ENCODE measurements at regions of chr19 and their contacts with region 1.

Region 1: DNA sequence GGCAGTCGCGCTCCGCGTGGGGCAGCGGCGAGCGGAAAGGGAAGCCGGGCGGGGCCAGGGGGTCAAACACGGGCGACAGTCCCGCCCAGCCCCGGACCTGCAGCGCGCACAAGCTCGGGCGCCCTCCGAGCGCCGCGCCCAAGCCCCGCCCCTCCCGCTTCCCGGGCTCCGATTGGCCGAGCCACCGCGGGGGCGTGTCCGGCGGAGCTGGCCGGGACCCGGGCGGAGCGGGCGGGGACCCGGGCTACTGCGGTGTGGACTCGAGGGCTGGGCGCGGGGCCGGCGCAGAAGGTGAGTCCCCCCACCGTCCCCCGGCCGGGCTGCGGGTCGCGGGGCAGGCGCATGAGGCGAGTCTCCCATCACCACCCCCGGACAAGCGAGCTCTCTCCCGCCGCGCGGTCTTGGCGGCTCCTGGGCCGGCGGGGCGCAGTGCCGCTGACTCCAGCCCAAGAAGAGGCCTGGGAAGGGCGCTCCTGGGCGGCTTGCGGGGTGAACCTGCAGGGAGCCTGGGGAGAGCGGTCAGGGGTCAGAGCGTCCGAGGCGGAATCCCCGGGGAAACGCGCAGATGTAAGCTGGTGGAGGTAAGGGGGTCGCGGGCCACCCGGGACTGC is at the start of gene PLEKHF1:
- DNase-seq: peak; percentile 73 to 88 (median 78)
- H3K4me3 ChIP-seq: peak within 1 kb of the TSS; percentile 77 to 83
- H3K4me3 Mint-ChIP-seq: peak within 1 kb of the TSS; percentile 89 to 98 (median 93)
- H3K27ac ChIP-seq: peak within 1 kb of the TSS; percentile 92
- H3K27ac Mint-ChIP-seq: peak within 1 kb of the TSS; percentile 92 to 100 (median 96)
- H3K4me1 ChIP-seq: peaks cover 42% of the 10 kb centered on the region
- H3K4me1 Mint-ChIP-seq: peaks cover 24 to 62% (median 38%) of the 10 kb centered on the region in 4 donors
- H3K27me3 ChIP-seq: no peaks in the 10 kb centered on the region
- H3K27me3 Mint-ChIP-seq: no peaks in the 10 kb centered on the region
- total RNA-seq, gene PLEKHF1: 31.2 to 32.4 TPM

Region 2: GRCh38 chr19:29576761-29577648 is 88.3 kb before region 1 on chr19:
- CTCF ChIA-PET with region 1: no interaction called
- POLR2A ChIA-PET with region 1: no interaction called
- intact Hi-C with region 1: no loop called
- DNase-seq: no peak
- H3K4me3 ChIP-seq: no peak overlapping the region
- H3K4me3 Mint-ChIP-seq: no peak overlapping the region
- H3K27ac ChIP-seq: no peak overlapping the region
- H3K27ac Mint-ChIP-seq: no peak overlapping the region
- H3K4me1 ChIP-seq: peaks cover 4% of the 10 kb centered on the region
- H3K4me1 Mint-ChIP-seq: peaks cover 0 to 2% (median 0%) of the 10 kb centered on the region in 4 donors
- H3K27me3 ChIP-seq: peaks cover 5% of the 10 kb centered on the region
- H3K27me3 Mint-ChIP-seq: peaks cover 20 to 68% of the 10 kb centered on the region in 2 donors

Region 3: GRCh38 chr19:29622138-29623070 is 42.9 kb before region 1 on chr19:
- CTCF ChIA-PET with region 1: interaction called, 75 read pairs
- POLR2A ChIA-PET with region 1: interaction called, 93 read pairs
- intact Hi-C with region 1: no loop called
- DNase-seq: peak; percentile 22 to 55 (median 36)
- H3K4me3 ChIP-seq: no peak overlapping the region
- H3K4me3 Mint-ChIP-seq: peak overlapping the region in 7 of 8 donors; percentile 19 to 85 (median 71)
- H3K27ac ChIP-seq: peak overlapping the region; percentile 35
- H3K27ac Mint-ChIP-seq: peak overlapping the region; percentile 73 to 94 (median 91)
- H3K4me1 ChIP-seq: peaks cover 52% of the 10 kb centered on the region
- H3K4me1 Mint-ChIP-seq: peaks cover 40 to 56% (median 47%) of the 10 kb centered on the region in 4 donors
- H3K27me3 ChIP-seq: no peaks in the 10 kb centered on the region
- H3K27me3 Mint-ChIP-seq: no peaks in the 10 kb centered on the region

Region 4: DNA sequence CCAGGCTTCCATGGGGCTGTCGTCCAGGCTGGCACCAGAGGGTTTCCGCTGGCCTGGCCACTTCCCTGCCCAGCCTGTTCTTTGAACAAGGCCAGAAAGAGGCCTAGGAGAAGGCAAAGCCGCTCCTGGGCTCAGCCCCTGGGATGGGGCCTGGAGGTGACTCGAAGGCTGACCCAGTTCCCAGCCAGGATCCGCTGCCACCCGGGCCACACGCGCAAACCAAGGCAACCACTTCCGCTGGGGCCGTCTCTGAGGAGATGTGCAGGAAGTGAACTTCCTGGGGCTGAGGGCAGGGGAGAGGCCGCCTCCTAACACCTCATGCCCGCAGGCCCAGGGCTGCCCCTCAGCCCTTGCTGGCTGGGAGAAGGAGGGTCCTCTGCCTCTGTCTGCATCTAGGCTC is 15.1 kb after region 1 on chr19:
- CTCF ChIA-PET with region 1: interaction called, 96 read pairs
- POLR2A ChIA-PET with region 1: interaction called, 148 read pairs
- intact Hi-C with region 1: loop called (anchors 2 kb)
- DNase-seq: peak; percentile 81 to 88 (median 88)
- H3K4me3 ChIP-seq: peak overlapping the region in 1 of 2 donors; percentile 26
- H3K4me3 Mint-ChIP-seq: peak overlapping the region; percentile 71 to 88 (median 75)
- H3K27ac ChIP-seq: peak overlapping the region; percentile 49
- H3K27ac Mint-ChIP-seq: peak overlapping the region; percentile 85 to 96 (median 93)
- H3K4me1 ChIP-seq: peaks cover 76% of the 10 kb centered on the region
- H3K4me1 Mint-ChIP-seq: peaks cover 37 to 89% (median 67%) of the 10 kb centered on the region in 4 donors
- H3K27me3 ChIP-seq: no peaks in the 10 kb centered on the region
- H3K27me3 Mint-ChIP-seq: no peaks in the 10 kb centered on the region

Region 5: DNA sequence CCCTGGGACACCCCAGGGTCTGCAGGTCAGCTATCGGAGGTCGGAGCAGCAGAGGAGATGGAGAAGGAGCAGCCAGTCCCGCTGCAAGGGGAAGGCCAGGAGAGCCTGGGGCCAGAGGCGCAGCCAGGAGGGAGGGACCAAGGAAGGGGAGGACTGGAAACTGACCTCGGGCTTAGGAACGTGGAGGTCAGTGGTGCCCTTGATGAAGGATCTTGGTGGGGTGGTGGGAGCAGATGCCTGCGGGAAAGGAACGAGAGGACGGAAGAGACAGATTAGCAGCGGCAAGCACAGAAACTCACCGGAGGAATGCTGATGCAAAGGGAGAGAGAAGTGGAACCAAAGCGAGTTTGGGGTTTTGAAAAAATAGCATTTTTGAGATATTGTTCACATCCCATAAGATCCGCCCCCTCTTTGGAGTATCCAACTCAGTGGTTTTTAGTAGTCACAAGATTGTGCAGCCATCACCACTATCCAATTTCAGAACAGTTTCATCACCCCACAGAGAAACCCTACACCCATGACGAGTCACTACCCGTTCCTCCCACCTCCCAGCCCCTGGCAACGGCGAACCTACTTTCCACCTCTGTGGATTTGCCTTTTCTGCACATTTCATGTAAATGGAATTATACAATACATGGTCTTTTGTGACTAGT is 22.1 kb after region 1 on chr19:
- CTCF ChIA-PET with region 1: interaction called, 158 read pairs
- POLR2A ChIA-PET with region 1: interaction called, 148 read pairs
- intact Hi-C with region 1: loop called (anchors 1 kb)
- DNase-seq: no peak
- H3K4me3 ChIP-seq: no peak overlapping the region
- H3K4me3 Mint-ChIP-seq: no peak overlapping the region
- H3K27ac ChIP-seq: no peak overlapping the region
- H3K27ac Mint-ChIP-seq: peak overlapping the region in 1 of 7 donors; percentile 77
- H3K4me1 ChIP-seq: peaks cover 13% of the 10 kb centered on the region
- H3K4me1 Mint-ChIP-seq: peaks cover 20 to 59% (median 44%) of the 10 kb centered on the region in 4 donors
- H3K27me3 ChIP-seq: no peaks in the 10 kb centered on the region
- H3K27me3 Mint-ChIP-seq: no peaks in the 10 kb centered on the region

Region 6: DNA sequence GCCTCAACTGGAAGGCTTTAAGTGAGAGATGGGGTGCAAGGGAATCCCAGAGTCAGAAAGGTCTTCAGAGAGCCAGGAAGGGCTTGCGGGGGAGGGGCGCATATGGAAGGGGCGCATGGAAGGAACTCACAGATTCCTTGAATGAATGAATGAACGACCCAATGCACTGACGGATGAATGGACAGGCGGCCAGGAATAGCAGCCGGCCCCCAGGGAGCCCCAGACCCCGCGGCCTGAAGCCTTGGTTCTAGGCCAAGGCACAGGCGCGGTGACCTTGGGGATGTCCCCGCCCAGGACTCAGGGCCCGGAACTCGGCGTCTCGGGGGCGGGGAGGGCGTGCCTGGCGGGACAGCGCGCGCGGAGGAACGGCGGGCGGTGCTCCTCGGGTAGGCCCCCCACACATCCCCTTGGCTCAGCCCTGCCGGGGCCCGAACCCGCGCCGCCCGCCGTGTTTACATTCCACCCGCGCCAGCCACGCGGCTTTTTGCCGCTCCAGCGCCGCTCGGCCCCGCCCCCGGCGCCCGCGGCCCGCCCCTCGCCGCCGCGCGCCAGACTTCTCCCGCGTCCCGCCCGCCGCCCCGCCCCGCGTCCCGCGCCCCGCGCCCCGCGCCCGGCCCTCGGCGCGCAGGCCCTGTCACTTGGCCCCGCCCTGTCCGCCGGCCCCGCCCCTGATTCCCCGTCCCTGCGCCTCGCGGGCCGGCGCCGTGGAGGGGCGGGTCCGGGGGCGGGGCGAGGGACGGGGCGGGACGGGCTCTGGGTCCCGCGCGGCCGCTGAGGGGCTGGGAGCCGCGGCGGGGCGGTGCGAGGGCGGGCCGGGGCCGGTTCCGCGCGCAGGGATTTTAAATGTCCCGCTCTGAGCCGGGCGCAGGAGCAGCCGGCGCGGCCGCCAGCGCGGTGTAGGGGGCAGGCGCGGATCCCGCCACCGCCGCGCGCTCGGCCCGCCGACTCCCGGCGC is 146.1 kb after region 1 on chr19 and contains the start of gene CCNE1:
- CTCF ChIA-PET with region 1: no interaction called
- POLR2A ChIA-PET with region 1: no interaction called
- intact Hi-C with region 1: loop called (anchors 1 kb)
- DNase-seq: peak; percentile 90 to 93 (median 92)
- H3K4me3 ChIP-seq: peak within 1 kb of the TSS in 1 of 2 donors; percentile 35
- H3K4me3 Mint-ChIP-seq: peak within 1 kb of the TSS; percentile 81 to 97 (median 86)
- H3K27ac ChIP-seq: peak within 1 kb of the TSS; percentile 52
- H3K27ac Mint-ChIP-seq: peak within 1 kb of the TSS; percentile 75 to 92 (median 88)
- H3K4me1 ChIP-seq: peaks cover 10% of the 10 kb centered on the region
- H3K4me1 Mint-ChIP-seq: peaks cover 6 to 17% (median 14%) of the 10 kb centered on the region in 4 donors
- H3K27me3 ChIP-seq: no peaks in the 10 kb centered on the region
- H3K27me3 Mint-ChIP-seq: no peaks in the 10 kb centered on the region
- total RNA-seq, gene CCNE1: 2.9 to 3.4 TPM